Right ventricle myocardium superior (tissue), 1 donor: ENCODE measurements at regions of chr1 and their contacts with region 1.

Region 1: GRCh38 chr1:25695090-25695770 is 78.6 kb downstream of the MAN1C1 start:
- DNase-seq: peak; percentile 87
- ATAC-seq: peak; percentile 89

Region 2: GRCh38 chr1:25590096-25590824 is 105.0 kb before region 1 on chr1:
- intact Hi-C with region 1: no loop called
- DNase-seq: peak; percentile 78
- ATAC-seq: peak; percentile 76

Region 3: GRCh38 chr1:25616095-25616986 is 78.9 kb before region 1 on chr1 and contains the start of gene MAN1C1:
- intact Hi-C with region 1: loop called (anchors 5 kb)
- DNase-seq: peak; percentile 94
- ATAC-seq: peak; percentile 92
- total RNA-seq, gene MAN1C1: 17.5 TPM

Region 4: DNA sequence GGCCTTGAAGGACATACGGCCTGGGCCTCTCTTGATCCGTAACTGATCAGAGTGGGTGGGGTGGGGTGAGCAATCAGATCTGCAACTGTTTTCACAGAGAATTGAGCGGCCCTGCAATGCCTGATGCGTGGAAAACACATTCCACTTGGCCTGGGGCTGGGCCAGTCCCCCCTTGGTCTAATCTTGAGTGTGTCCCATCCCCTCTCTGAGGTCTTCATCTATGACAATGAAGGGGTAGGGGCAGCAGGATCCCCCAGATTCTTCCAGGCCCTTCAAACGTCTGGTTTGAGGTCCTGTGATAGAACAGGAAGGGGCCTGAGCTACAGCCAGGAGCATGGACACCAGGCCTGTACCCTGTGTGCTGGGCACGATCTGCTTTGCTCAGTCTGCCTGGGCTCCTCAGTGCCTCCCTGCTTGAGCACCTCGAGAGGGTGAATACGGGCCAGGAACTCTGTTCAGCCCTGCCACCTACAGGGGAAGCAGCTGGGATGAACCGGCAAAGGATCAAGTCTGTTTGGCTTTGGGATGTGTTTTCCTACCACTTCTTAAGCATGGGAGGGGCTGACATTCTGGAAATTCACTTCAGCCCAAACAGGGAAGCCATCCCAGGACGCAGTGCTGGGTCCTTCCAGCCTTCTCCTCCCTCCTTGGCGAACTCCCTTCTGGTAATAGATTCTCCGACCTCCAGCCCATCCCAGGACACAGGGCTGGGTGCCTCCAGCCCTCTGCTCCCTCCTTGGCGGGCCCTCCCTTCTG is 48.8 kb after region 1 on chr1:
- intact Hi-C with region 1: loop called (anchors 5 kb)
- DNase-seq: peak; percentile 81
- ATAC-seq: peak; percentile 87

Region 5: GRCh38 chr1:25780311-25781129 is 85.3 kb after region 1 on chr1:
- intact Hi-C with region 1: loop called (anchors 10 kb)
- DNase-seq: peak; percentile 27
- ATAC-seq: no peak